ENCODE measurements at regions of chr3 and their contacts with region 1.

Region 1: GRCh38 chr3:173584093-173584837 is 186.7 kb downstream of the NLGN1 start:
- DNase-seq: peak; percentile 66
- H3K4me3 Mint-ChIP-seq: peak overlapping the region; percentile 85
- H3K27ac Mint-ChIP-seq: peak overlapping the region; percentile 22
- H3K4me1 Mint-ChIP-seq: peaks cover 19% of the 10 kb centered on the region
- H3K27me3 Mint-ChIP-seq: no peaks in the 10 kb centered on the region
- CTCF ChIP-seq: peak; percentile 87

Region 2: DNA sequence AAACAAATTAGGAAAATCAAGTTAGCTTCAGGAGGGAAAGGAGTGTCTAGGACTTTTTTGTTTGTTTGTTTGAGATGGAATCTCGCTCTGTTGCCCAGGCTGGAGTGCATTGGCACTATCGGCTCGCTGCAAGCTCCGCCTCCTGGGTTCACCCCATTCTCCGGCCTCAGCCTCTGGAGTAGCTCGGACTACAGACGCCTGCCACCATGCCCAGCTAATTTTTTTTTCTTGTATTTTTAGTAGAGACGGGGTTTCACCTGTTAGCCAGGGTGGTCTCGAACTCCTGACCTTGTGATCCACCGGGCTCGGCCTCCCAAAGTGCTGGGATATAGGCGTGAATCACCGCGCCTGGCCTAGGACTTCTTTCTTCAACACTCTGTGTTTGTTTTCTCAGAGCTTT is 15.6 kb before region 1 on chr3:
- CTCF ChIA-PET with region 1: no interaction called
- intact Hi-C with region 1: no loop called
- DNase-seq: no peak
- H3K4me3 Mint-ChIP-seq: no peak overlapping the region
- H3K27ac Mint-ChIP-seq: no peak overlapping the region
- H3K4me1 Mint-ChIP-seq: no peaks in the 10 kb centered on the region
- H3K27me3 Mint-ChIP-seq: no peaks in the 10 kb centered on the region
- CTCF ChIP-seq: no peak

Region 3: GRCh38 chr3:173639098-173639497 is 54.8 kb after region 1 on chr3:
- CTCF ChIA-PET with region 1: no interaction called
- intact Hi-C with region 1: no loop called
- DNase-seq: no peak
- H3K4me3 Mint-ChIP-seq: no peak overlapping the region
- H3K27ac Mint-ChIP-seq: no peak overlapping the region
- H3K4me1 Mint-ChIP-seq: no peaks in the 10 kb centered on the region
- H3K27me3 Mint-ChIP-seq: no peaks in the 10 kb centered on the region
- CTCF ChIP-seq: no peak

Region 4: DNA sequence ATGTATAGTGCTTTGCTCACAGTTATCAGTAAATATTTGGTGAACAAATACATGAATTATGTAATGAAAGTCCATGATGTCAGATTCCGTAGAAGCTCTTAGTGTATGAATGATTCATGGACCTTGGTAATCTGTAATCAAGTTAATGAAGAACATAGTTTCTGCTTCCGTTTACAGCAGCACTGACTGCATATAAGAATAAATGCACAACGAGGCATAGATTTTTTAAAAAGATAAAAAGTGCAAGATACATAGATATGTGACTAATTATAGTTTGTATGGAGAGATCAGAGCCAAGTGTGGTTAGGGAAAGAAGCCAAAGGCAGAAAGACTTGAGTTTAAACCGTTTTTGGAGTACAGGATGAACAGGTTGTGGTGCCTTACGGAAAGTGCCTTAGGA is 106.3 kb after region 1 on chr3:
- CTCF ChIA-PET with region 1: no interaction called
- intact Hi-C with region 1: loop called (anchors 5 kb)
- DNase-seq: peak; percentile 34
- H3K4me3 Mint-ChIP-seq: peak overlapping the region; percentile 55
- H3K27ac Mint-ChIP-seq: peak overlapping the region; percentile 66
- H3K4me1 Mint-ChIP-seq: peaks cover 41% of the 10 kb centered on the region
- H3K27me3 Mint-ChIP-seq: no peaks in the 10 kb centered on the region
- CTCF ChIP-seq: no peak

Region 5: DNA sequence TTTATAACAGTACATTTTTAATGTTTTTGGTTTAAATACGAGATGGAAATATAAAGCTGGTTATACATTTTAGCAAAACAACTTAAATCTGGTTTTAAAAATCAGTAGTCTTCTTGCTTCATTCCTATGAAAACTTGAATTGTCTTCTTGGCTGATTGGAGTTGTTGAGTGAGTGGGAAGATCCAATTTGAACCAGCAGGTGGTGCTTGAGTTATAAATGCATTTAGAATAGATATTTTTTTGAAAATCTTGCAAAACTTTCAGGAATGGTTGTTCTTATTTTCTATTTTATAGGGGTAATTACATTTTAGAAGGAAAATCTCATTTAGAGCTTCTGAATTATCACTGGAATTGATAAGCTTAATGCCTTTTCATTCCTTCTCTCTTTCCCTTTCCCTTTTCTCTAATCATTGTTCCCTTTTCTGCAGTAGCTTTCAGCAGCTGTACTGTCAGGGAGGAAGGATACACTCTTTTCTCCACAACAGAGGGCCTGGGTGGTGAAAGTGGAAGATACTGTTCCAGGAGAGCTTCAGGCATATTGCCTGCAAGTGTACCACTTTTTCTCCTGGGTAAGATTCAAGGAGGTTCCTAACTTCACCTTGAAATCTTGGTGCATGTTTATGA is 148.9 kb after region 1 on chr3:
- CTCF ChIA-PET with region 1: no interaction called
- intact Hi-C with region 1: loop called (anchors 2 kb)
- DNase-seq: peak; percentile 34
- H3K4me3 Mint-ChIP-seq: no peak overlapping the region
- H3K27ac Mint-ChIP-seq: no peak overlapping the region
- H3K4me1 Mint-ChIP-seq: no peaks in the 10 kb centered on the region
- H3K27me3 Mint-ChIP-seq: no peaks in the 10 kb centered on the region
- CTCF ChIP-seq: peak; percentile 64

Region 6: DNA sequence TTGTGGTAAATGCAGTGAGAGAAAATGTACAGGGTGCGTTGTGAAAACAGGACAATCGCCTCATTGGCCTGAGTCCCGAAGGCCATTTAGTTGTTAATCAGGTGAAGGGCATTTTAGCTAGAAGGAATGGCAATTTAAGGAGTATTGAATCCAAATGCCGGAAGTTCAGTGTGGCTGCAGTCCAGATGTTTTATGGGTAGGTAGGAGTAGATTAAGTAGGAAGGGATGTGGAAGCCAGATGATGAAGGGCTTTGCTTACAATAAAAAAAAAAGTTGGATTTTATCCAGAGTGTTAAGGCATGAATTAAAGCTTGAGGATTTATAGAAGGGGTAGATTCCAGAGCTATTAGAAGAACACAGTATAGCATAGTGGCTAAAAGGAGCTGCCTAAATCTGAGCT is 386.0 kb after region 1 on chr3:
- CTCF ChIA-PET with region 1: no interaction called
- intact Hi-C with region 1: no loop called
- DNase-seq: no peak
- H3K4me3 Mint-ChIP-seq: no peak overlapping the region
- H3K27ac Mint-ChIP-seq: no peak overlapping the region
- H3K4me1 Mint-ChIP-seq: no peaks in the 10 kb centered on the region
- H3K27me3 Mint-ChIP-seq: no peaks in the 10 kb centered on the region
- CTCF ChIP-seq: no peak

Region 7: DNA sequence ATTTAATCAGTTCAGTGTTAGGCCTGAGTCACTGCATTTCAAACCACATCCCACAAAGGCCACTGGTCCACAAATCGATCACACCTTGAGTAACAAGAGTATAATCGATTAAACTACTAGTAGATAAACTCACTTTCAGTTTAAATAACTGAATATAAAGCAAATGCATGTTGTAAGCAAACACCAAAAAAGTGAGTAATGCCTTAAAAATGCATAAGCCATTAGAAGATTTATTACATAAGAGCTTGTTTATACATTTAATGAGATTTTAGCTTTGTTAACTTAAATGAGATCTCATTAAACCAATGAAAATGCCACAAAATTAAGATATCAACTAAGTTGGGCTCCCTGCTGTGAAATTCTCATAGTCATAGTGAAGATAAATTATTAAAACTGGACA is 514.4 kb after region 1 on chr3:
- CTCF ChIA-PET with region 1: no interaction called
- intact Hi-C with region 1: loop called (anchors 5 kb)
- DNase-seq: peak; percentile 43
- H3K4me3 Mint-ChIP-seq: no peak overlapping the region
- H3K27ac Mint-ChIP-seq: no peak overlapping the region
- H3K4me1 Mint-ChIP-seq: peaks cover 19% of the 10 kb centered on the region
- H3K27me3 Mint-ChIP-seq: no peaks in the 10 kb centered on the region
- CTCF ChIP-seq: no peak

Region 8: DNA sequence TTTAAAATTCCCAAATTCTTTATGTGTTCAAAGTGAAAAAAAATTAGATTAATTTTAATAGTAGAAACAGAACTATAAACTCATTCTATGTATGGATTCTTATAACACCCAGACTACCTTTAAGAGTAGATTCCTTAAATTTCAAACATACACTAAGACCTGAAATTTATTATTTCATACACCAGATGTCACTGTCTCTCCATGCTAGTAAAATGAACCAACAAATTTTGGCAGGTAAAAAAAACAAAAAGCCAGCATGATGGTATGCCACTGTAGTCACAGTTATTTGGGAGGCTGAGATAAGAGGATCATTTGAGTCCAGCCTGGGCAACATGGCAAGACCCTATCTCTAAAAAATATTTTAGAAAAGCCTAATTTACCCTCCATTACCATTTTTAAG is 813.6 kb after region 1 on chr3:
- CTCF ChIA-PET with region 1: no interaction called
- intact Hi-C with region 1: loop called (anchors 5 kb)
- DNase-seq: no peak
- H3K4me3 Mint-ChIP-seq: no peak overlapping the region
- H3K27ac Mint-ChIP-seq: no peak overlapping the region
- H3K4me1 Mint-ChIP-seq: no peaks in the 10 kb centered on the region
- H3K27me3 Mint-ChIP-seq: no peaks in the 10 kb centered on the region
- CTCF ChIP-seq: peak; percentile 64

Measured in Calu3 (cell line).